Natural killer cell (primary cell): ENCODE measurements at regions of chr12 and their contacts with region 1.

Region 1: GRCh38 chr12:107042801-107043200 is 50.5 kb downstream of the CRY1 start:
- DNase-seq: no peak
- ATAC-seq: peak in 1 of 3 donors; percentile 16
- H3K4me3 ChIP-seq: no peak overlapping the region
- H3K4me3 Mint-ChIP-seq: no peak overlapping the region
- H3K27ac ChIP-seq: no peak overlapping the region
- H3K27ac Mint-ChIP-seq: no peak overlapping the region
- H3K4me1 ChIP-seq: no peaks in the 10 kb centered on the region
- H3K4me1 Mint-ChIP-seq: peaks cover 19 to 34% of the 10 kb centered on the region in 2 donors
- H3K27me3 ChIP-seq: no peaks in the 10 kb centered on the region
- H3K27me3 Mint-ChIP-seq: no peaks in the 10 kb centered on the region
- CTCF ChIP-seq: no peak

Region 2: DNA sequence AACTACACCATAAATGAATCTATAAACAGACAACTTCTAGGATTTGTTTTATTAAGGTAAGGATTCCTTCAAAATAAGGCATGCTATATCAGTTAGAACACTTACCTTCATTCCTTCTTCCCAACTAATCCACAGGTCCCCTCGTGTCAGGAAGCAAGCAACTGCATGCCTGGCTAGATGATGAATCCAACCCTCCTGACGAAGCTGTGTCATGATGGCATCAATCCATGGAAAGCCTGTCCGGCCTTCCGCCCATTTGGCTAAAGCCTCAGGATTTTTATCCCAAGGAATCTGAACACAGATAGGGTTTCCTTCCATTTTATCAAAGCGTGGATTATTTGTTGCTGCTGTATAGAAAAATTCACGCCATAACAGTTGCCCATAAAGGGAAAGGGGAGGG is 43.4 kb before region 1 on chr12:
- intact Hi-C with region 1: no loop called
- DNase-seq: no peak
- ATAC-seq: no peak
- H3K4me3 ChIP-seq: no peak overlapping the region
- H3K4me3 Mint-ChIP-seq: no peak overlapping the region
- H3K27ac ChIP-seq: no peak overlapping the region
- H3K27ac Mint-ChIP-seq: no peak overlapping the region
- H3K4me1 ChIP-seq: no peaks in the 10 kb centered on the region
- H3K4me1 Mint-ChIP-seq: no peaks in the 10 kb centered on the region
- H3K27me3 ChIP-seq: no peaks in the 10 kb centered on the region
- H3K27me3 Mint-ChIP-seq: no peaks in the 10 kb centered on the region
- CTCF ChIP-seq: no peak

Region 3: DNA sequence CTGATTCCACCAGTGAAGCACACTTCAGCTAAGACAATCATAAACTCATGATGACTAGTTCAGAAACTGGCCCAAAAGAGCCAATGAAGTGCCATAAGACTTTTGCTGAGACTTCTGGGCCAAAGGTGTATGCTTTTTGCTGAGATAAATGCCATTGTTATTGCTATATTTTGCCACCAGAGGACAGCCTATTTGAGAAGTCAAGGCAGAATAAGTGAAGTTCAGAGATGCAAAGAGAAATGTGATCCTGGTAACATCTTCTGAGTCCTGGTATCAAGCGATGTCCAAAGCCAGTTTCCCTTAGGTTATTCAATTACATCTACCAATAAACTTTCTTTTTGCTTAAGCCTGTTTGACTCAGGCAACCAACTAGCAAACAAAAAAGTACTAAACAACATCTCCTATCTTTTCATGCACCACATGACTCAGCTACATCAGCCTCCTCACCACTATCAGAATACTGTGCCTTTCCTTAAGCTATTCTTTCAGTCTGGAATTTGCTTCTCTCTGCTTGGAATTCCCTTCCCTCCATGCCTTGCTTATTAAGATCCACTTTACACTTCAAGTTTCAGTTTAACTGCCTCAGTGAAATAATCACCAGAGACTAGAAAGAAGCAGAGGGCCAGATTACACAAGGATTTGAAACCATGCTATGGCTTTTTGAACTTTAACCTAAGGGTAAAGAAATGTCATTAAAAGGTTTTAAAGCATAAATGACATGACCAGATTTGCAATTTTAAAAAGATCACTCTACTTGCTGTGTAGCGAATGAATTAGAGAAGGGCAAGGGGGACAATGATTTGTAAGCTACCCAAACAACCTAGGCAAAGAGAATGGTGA is 36.6 kb after region 1 on chr12:
- intact Hi-C with region 1: loop called (anchors 5 kb)
- DNase-seq: peak in 1 of 2 donors; percentile 52
- ATAC-seq: peak; percentile 57 to 85 (median 68)
- H3K4me3 ChIP-seq: no peak overlapping the region
- H3K4me3 Mint-ChIP-seq: no peak overlapping the region
- H3K27ac ChIP-seq: no peak overlapping the region
- H3K27ac Mint-ChIP-seq: no peak overlapping the region
- H3K4me1 ChIP-seq: no peaks in the 10 kb centered on the region
- H3K4me1 Mint-ChIP-seq: peaks cover 29 to 30% of the 10 kb centered on the region in 2 donors
- H3K27me3 ChIP-seq: no peaks in the 10 kb centered on the region
- H3K27me3 Mint-ChIP-seq: no peaks in the 10 kb centered on the region
- CTCF ChIP-seq: peak; percentile 48

Region 4: GRCh38 chr12:107545737-107546353 is 503.0 kb after region 1 on chr12:
- intact Hi-C with region 1: no loop called
- DNase-seq: no peak
- ATAC-seq: no peak
- H3K4me3 ChIP-seq: no peak overlapping the region
- H3K4me3 Mint-ChIP-seq: no peak overlapping the region
- H3K27ac ChIP-seq: no peak overlapping the region
- H3K27ac Mint-ChIP-seq: no peak overlapping the region
- H3K4me1 ChIP-seq: no peaks in the 10 kb centered on the region
- H3K4me1 Mint-ChIP-seq: peaks cover 0 to 9% of the 10 kb centered on the region in 2 donors
- H3K27me3 ChIP-seq: no peaks in the 10 kb centered on the region
- H3K27me3 Mint-ChIP-seq: no peaks in the 10 kb centered on the region
- CTCF ChIP-seq: no peak